Activated naive CD4-positive, alpha-beta T cell treated with anti-CD3 and anti-CD28 coated beads for 36 hours (primary cell): ENCODE measurements at regions of chr11 and their contacts with region 1.

Region 1: DNA sequence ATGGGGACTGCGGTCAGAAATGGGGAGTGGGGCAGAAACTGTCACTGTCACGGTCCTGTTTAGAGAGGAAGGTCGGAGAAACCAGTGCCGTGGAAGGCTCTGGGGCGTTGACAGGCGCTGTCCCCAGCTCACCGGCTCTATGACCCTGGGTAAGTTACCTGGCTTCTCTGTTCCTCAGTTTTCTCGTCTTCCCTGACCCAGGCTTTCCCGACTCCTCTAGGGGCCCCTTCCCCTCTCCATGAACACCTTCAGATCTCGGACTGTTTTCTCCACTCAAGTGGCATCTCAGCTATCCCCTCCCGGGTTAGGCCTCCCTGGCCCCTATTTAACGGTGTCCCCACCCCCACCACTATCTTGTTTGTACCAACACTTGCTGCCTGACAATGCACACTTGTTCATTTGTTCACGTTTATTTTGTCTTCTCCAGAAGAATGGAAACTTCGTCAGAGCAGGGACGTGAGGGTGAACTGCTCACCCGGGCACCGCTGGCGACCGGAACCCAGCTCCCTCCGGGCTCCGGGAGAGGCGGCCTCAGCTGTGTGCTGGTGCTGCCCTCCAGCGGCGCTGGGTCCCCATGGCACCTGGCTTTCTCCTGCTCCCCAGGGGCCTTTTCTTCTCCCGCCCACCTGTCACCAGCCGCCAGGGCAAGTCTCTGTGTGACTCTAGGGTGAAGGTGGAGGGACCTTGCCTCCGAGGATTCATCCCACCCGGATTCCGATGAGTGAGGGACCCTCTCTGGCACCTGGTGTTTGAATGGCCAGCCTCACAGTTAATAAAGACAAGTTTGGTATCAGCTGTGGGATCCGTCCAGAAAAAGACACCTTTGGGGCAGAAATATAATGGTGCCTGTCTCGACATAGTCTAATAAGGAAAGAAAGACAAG is 33.1 kb upstream of the SLC35C1 start:
- DNase-seq: peak; percentile 86
- H3K4me3 Mint-ChIP-seq: peak overlapping the region; percentile 86
- H3K27ac Mint-ChIP-seq: peak overlapping the region; percentile 50
- H3K4me1 Mint-ChIP-seq: peaks cover 7% of the 10 kb centered on the region
- H3K27me3 Mint-ChIP-seq: no peaks in the 10 kb centered on the region

Region 2: DNA sequence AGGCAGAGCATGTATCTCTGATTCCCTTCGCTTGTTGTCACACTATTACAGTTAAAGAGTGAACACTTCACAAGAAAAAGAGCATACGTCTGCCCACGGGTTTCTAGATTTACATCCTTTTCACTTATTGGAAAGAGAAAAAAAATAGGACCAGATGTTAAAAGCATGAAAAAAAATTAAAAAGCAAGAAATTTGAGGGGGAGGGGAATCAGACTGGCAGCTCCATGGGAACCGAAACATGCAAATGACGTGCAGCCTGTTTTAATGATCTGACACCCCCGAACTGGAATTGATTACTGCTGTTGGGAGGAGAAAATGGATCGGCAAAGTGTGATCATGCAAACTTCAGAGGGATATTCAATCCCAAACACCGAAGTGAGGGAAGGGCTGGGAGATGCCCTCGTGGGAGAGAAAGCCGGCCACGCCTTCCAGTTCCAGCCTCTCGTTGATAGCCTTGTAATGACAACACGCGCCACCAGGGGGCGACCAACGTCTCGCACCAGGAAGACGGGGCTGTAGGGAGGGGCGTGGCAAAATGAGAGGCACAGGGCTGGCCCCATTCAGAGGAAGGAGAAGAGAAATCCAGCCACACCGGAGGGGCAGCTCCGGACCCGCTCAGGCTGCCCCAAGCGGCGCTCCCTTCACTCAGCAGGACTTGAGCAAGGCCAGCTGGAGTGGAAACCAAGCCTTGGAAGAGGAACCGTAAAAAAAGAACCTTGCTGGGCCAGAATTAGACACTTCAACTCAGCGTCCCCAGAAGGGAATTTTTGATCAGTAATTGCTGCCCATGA is 431.9 kb before region 1 on chr11:
- CTCF ChIA-PET with region 1: interaction called, 14 read pairs
- intact Hi-C with region 1: loop called (anchors 1 kb)
- DNase-seq: peak; percentile 96
- H3K4me3 Mint-ChIP-seq: peak overlapping the region; percentile 53
- H3K27ac Mint-ChIP-seq: no peak overlapping the region
- H3K4me1 Mint-ChIP-seq: peaks cover 8% of the 10 kb centered on the region
- H3K27me3 Mint-ChIP-seq: peaks cover 3% of the 10 kb centered on the region

Region 3: GRCh38 chr11:45411228-45411946 is 360.4 kb before region 1 on chr11:
- CTCF ChIA-PET with region 1: no interaction called
- intact Hi-C with region 1: loop called (anchors 5 kb)
- DNase-seq: no peak
- H3K4me3 Mint-ChIP-seq: no peak overlapping the region
- H3K27ac Mint-ChIP-seq: no peak overlapping the region
- H3K4me1 Mint-ChIP-seq: no peaks in the 10 kb centered on the region
- H3K27me3 Mint-ChIP-seq: peaks cover 33% of the 10 kb centered on the region

Region 4: DNA sequence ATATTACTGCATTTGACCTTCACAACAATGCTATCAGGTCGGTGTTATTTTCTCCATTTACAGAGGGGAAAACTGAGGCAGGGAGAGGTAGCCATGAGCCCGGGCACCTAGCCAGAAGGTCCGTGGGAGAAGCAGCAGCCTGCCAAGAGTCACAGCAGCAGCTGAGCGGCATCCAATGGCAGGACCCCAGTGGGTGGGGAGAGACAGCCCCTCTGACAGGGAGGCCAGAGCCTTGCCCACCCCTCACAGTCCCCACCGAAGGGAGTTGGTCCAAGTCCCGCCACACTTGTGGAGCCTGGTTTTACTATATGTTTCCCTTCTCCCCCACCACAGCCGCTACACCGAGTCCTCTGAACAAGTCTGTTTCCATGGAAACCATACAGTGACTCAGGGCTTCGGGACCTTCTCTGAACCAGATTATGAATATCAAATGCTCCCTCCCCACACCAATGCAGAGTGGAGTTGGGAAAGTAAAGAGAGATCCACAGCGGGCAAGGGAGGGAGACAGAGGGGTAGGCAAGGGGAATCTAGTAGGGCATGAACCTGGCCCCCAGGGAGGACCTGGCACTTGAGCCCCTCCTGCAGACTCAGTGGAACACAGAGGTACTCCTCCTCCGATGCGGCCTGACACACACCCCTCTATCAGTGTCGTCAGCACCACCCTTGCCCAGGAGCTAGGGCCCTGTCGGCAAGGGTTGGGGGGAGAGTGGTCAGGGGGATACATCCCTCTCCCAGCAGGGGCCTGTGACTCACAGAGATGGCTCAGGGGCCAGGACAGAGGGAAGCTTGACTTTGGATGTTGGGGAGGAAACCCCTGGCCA is 108.9 kb before region 1 on chr11:
- CTCF ChIA-PET with region 1: interaction called, 6 read pairs
- intact Hi-C with region 1: loop called (anchors 2 kb)
- DNase-seq: peak; percentile 46
- H3K4me3 Mint-ChIP-seq: no peak overlapping the region
- H3K27ac Mint-ChIP-seq: no peak overlapping the region
- H3K4me1 Mint-ChIP-seq: peaks cover 5% of the 10 kb centered on the region
- H3K27me3 Mint-ChIP-seq: peaks cover 49% of the 10 kb centered on the region

Region 5: GRCh38 chr11:45737056-45737455 is 34.8 kb before region 1 on chr11:
- CTCF ChIA-PET with region 1: no interaction called
- intact Hi-C with region 1: loop called (anchors 1 kb)
- DNase-seq: peak; percentile 21
- H3K4me3 Mint-ChIP-seq: no peak overlapping the region
- H3K27ac Mint-ChIP-seq: peak overlapping the region; percentile 68
- H3K4me1 Mint-ChIP-seq: peaks cover 16% of the 10 kb centered on the region
- H3K27me3 Mint-ChIP-seq: peaks cover 3% of the 10 kb centered on the region

Region 6: GRCh38 chr11:45804761-45805304 is 33.0 kb after region 1 on chr11 and contains the start of gene SLC35C1:
- CTCF ChIA-PET with region 1: interaction called, 10 read pairs
- intact Hi-C with region 1: no loop called
- DNase-seq: peak; percentile 97
- H3K4me3 Mint-ChIP-seq: peak within 1 kb of the TSS; percentile 90
- H3K27ac Mint-ChIP-seq: peak within 1 kb of the TSS; percentile 81
- H3K4me1 Mint-ChIP-seq: peaks cover 36% of the 10 kb centered on the region
- H3K27me3 Mint-ChIP-seq: no peaks in the 10 kb centered on the region
- total RNA-seq, gene SLC35C1: 5.6 to 6.5 TPM

Region 7: GRCh38 chr11:46006418-46007070 is 234.7 kb after region 1 on chr11:
- CTCF ChIA-PET with region 1: interaction called, 3 read pairs
- intact Hi-C with region 1: loop called (anchors 1 kb)
- DNase-seq: peak; percentile 14
- H3K4me3 Mint-ChIP-seq: no peak overlapping the region
- H3K27ac Mint-ChIP-seq: no peak overlapping the region
- H3K4me1 Mint-ChIP-seq: no peaks in the 10 kb centered on the region
- H3K27me3 Mint-ChIP-seq: no peaks in the 10 kb centered on the region